ENCODE measurements at regions of chr22 and their contacts with region 1.

Region 1: DNA sequence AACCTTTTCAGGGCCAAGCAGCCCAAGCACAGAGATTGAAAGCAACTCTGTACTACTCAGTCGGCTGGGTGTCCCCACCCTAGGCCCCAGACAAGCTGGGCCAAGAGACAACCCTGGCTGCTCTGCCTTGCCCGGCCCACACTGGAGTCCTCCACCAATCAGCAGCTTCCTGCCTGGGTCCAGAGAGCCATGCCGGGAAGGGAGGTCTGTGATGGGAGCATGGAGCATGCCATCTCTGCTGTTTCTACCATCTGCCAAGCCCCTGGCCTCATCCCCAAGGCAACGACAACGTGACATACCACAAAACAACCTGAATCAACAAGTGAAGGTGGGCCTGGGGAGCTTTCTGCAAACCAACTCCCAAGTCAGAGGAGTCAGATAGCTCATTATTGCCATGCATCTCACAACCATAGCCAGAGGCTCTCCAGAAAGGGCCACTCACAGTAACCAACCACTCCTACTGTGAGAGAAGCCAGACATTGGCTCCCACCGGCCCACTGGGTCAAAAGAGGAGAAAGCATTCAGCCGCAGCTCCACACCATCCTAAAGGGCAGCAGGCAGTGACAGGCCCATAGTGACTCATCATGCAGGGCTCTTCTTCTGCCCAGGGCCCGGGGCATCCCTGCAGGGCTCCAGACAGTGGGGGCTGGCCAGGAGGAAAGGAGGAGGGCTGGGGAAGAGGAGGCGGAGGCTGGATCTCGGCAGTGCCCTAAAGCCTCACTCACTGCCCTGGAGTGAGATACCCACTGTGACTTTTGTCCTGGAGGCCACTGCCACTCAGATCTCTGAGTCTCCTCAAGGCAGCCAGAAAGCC is 18.1 kb downstream of the PATZ1 start:
- DNase-seq: no peak
- H3K4me3 ChIP-seq: no peak overlapping the region
- H3K27ac ChIP-seq: no peak overlapping the region
- H3K4me1 ChIP-seq: no peaks in the 10 kb centered on the region
- H3K27me3 ChIP-seq: no peaks in the 10 kb centered on the region

Region 2: DNA sequence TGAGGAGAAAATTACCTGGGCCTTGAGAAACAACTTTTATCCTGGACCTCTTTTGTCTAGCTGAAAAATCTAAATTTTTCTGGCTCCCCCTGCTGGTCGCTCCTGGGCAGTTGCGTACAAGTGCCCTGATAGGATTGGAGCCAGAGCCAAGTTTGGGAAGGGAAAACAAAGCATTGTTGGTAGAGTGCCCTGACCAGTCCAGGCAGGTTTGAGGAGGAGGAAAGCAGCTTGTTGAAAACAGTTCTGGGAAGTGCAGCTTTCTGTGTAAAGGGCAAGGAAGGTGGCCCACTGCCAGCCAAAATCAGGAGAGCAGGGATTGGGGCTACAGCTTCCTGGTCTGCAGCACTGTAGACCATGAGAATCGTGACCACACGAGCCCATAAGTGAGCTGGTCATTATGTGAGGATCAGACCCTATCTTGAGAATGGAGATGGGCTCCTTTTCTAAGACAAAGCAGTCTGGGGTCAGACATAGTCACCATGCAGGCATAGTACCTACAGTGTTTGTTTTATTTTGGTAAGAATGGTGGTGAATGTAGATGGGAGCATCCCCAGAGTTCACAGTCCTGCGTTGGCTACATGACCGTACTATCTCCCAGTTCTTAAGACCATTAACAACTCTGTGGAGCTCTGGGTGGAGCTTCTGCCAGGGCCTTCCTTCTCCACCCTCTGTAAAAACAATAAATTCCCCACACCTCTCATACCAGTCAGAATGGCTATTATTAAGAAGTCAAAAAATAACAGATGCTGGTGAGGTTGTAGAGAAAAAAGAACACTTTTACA is 14.5 kb before region 1 on chr22:
- CTCF ChIA-PET with region 1: interaction called, 16 read pairs
- POLR2A ChIA-PET with region 1: interaction called, 3 read pairs
- DNase-seq: peak in 2 of 3 donors; percentile 41 to 59
- H3K4me3 ChIP-seq: no peak overlapping the region
- H3K27ac ChIP-seq: no peak overlapping the region
- H3K4me1 ChIP-seq: no peaks in the 10 kb centered on the region
- H3K27me3 ChIP-seq: no peaks in the 10 kb centered on the region